ENCODE measurements at regions of chr7 and their contacts with region 1.

Region 1: DNA sequence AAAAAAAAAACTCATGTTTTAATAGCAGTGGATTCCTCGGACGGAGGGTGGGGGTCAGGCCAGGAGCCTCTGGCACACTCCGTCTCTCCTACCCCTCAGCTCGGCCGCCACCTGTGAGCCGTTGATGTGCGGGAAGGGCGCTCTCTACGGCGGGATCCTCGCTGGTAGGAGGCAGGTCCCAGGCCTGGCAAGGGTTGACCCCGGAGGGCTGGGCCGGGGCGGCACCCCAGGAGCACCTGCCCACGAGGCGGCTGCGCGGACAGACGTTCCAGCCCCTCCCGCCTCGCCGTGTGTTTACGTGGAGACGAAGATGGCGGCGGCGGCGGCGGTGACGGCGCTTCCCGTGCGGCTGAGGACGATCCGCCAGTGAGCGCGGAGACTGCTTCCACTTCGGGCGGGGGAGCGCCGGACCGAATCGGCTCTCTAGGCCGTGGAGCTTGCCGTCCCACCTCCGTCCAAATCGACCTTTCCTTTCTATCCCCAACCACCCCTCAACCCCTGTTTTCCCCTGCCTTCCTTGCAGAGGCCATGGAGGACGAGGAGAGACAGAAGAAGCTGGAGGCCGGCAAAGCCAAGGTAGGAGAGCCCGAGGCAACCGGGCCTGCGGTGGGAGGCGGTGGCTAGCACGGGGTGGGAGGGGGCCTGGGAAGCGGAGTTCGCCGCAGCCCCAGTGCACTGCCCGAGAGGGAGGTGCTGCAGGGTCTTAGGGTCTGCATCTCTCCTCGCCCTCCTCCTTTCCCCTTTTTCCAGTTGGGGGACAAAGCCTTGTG is at the start of gene AKAP9:
- DNase-seq: peak; percentile 60 to 93
- H3K4me3 ChIP-seq: peak within 1 kb of the TSS; percentile 61 to 81
- H3K27ac ChIP-seq: peak within 1 kb of the TSS; percentile 89 to 94
- H3K4me1 ChIP-seq: peaks cover 0 to 7% of the 10 kb centered on the region in 2 donors
- H3K27me3 ChIP-seq: no peaks in the 10 kb centered on the region
- CTCF ChIP-seq: no peak
- total RNA-seq, gene AKAP9: 14.4 TPM

Region 2: DNA sequence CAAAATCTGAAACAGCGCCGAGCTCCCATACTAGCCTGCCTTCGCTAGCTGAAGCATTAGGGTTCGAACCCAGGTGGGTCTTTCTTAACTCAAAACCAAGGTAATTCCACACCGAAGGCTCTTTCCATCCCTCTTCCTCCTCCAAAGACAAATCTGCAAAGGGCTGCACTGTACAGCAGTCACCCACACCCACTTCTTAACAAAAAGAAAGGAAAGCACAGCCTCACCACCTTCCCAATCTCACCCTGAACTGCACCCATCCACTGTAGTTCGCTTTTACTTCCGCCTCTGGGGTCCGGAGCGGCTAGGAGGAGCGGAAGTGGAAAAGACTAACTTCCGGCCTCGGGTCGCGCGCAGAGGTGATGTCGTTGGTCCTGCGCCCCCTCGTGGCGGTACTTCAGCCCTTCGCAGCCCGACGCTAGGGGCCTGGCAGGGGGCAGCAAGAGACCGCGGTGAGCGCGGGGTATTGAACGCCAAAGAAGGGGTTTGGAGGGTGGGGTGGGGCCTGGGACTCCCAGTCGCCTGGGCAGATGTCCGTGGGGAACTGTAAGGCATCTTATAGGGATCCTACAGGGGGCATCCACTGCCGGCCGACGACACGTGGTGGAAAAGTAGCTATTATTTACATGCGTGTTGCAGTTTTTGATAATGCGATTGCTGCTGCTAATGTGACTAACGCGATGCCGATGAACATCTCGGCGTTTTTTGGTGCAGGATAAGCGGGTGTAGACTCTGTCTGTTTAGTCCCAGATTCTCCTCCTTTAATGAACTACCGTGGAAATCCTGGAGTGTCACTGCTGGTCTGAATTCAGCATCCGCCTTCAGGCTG is 60.1 kb before region 1 on chr7 and contains the start of gene MTERF1:
- intact Hi-C with region 1: loop called (anchors 2 kb)
- DNase-seq: peak; percentile 23 to 93
- H3K4me3 ChIP-seq: peak within 1 kb of the TSS; percentile 82 to 83
- H3K27ac ChIP-seq: peak within 1 kb of the TSS in 1 of 2 donors; percentile 9
- H3K4me1 ChIP-seq: peaks cover 0 to 9% of the 10 kb centered on the region in 2 donors
- H3K27me3 ChIP-seq: no peaks in the 10 kb centered on the region
- CTCF ChIP-seq: peak; percentile 83 to 98 (median 96)
- total RNA-seq, gene MTERF1: 5.0 TPM

Region 3: GRCh38 chr7:91898246-91898992 is 42.3 kb before region 1 on chr7:
- intact Hi-C with region 1: no loop called
- DNase-seq: no peak
- H3K4me3 ChIP-seq: no peak overlapping the region
- H3K27ac ChIP-seq: no peak overlapping the region
- H3K4me1 ChIP-seq: no peaks in the 10 kb centered on the region
- H3K27me3 ChIP-seq: no peaks in the 10 kb centered on the region
- CTCF ChIP-seq: no peak

Region 4: GRCh38 chr7:92134271-92135051 is 193.7 kb after region 1 on chr7 and contains the start of gene CYP51A1:
- intact Hi-C with region 1: loop called (anchors 2 kb)
- DNase-seq: peak; percentile 77 to 97
- H3K4me3 ChIP-seq: peak within 1 kb of the TSS; percentile 67 to 88
- H3K27ac ChIP-seq: peak within 1 kb of the TSS; percentile 92 to 93
- H3K4me1 ChIP-seq: peaks cover 0 to 10% of the 10 kb centered on the region in 2 donors
- H3K27me3 ChIP-seq: no peaks in the 10 kb centered on the region
- CTCF ChIP-seq: no peak
- total RNA-seq, gene CYP51A1: 19.9 TPM

Region 5: DNA sequence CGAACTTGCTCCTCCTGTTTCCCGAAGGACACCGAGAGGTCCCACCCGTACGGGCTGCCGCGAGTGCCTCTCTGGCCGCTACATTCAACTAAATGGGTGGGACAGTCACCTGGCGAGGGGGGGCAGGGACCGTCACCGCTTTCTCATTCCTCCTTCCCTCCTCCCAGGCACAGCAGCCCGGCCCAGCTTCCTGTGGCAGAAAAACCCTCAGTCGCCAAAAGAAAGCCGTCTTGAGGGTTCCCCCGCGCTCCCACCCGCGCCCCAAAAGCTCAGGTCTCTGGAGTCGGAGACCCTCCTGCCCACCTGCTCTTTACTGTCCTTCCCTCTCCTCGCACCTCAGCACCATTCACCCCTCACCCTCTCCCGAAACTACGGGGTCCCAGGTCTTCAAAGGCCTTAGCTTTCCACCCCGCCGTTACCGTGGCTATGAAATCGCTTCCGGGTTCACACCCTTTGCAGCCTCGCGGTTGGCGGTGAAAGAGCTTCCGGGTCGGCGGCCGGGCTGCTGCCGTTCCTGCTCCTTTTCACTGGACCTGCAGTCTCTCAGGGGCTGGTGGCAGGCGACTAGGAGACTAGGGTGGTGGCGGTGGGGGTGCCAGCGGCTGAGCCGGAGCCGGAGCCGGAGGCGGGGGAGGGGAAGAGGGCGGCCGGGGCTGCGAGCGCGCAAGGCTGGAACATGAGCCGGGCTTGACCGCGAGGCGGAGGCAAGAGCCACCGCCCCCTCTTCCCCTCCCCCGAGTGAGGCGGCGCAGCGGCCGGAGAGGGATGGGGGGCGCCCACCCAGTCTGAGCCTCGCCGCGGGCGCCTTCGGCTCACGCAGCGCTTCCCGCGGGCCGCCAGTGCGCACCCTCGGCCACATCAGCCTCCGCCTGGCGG is 305.0 kb after region 1 on chr7 and contains the starts of genes ANKIB1 and KRIT1:
- intact Hi-C with region 1: loop called (anchors 10 kb)
- DNase-seq: peak; percentile 36 to 94
- H3K4me3 ChIP-seq: peak within 1 kb of the TSS; percentile 80 to 99
- H3K27ac ChIP-seq: peak within 1 kb of the TSS; percentile 90 to 94
- H3K4me1 ChIP-seq: peaks cover 0 to 25% of the 10 kb centered on the region in 2 donors
- H3K27me3 ChIP-seq: no peaks in the 10 kb centered on the region
- CTCF ChIP-seq: peak in 2 of 3 experiments; percentile 4 to 14
- total RNA-seq, gene ANKIB1: 27.4 TPM
- total RNA-seq, gene KRIT1: 66.1 TPM

Measured in ascending aorta (tissue), 2 donors.